ENCODE measurements at regions of chr7 and their contacts with region 1.

Region 1: DNA sequence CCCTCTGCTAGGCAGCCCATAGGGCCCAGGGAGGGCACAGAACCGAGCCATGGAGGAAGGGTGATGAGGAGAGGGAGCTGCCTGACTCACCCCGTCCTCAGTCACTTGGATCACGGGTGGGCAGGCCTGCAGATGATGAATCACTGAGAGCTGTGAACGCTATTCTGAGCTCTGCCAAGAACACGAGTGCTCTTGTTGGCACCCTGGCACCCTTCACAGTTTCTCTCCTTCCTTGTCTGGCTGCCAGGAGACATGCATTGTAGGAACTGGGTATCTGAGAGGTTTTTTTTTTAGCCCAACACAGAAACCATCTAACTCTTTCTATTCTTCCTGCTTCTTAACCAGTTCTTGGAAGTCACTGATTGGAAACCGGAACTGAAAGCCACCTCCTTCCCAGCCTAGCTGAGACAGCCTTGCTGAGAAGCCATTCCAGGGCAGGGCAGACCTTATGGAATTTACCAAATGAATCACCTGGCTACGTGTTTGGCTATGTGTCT is 82.1 kb downstream of the SLC37A3 start:
- DNase-seq: peak; percentile 74 to 97
- H3K4me3 ChIP-seq: peak overlapping the region; percentile 11; the same call in 1 of the 2 replicates
- H3K27ac ChIP-seq: peak overlapping the region; percentile 70
- H3K4me1 ChIP-seq: peaks cover 22% of the 10 kb centered on the region
- H3K27me3 ChIP-seq: no peaks in the 10 kb centered on the region
- CTCF ChIP-seq: no peak

Region 2: DNA sequence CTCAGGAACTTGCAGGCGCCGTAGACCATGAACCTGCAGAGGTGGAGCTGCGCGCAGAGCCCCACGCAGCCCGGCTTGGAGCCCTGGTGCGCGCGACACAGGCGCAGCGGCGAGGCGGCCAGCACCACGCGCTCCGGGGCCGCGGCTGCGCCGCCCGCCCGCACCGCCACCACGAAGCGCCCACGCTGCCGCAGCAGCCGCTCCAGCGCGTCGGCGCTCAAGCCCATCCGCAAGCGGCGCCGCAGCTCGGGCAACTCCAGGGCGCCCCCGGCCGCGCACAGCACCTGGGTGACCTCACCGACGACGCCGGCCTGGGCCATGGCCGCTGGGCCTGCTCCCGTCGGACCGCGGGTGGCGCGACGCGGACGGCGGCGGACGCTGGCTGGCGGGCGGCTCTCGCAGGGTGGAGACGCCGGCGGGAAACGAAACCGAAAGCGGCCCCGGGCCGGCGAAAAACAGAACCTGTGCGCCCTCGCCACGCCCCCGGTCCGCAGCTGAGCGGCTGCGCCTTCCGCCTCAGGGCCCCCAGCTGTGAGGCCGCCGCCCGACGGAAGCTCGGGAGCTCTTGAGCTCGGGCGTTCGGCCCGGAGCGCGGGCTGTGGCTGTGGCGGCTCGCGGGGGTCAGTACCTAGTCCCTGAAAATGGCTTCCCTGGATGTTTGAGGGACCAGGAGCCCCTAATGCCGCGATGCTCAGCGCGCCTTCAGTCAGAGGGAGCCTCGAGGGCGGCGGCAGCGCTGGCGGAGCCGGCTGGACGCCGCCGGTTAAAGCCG is 253.5 kb before region 1 on chr7 and contains the start of gene PARP12:
- CTCF ChIA-PET with region 1: interaction called, 3 read pairs
- POLR2A ChIA-PET with region 1: interaction called, 7 read pairs
- intact Hi-C with region 1: loop called (anchors 10 kb)
- DNase-seq: peak; percentile 70 to 91
- H3K4me3 ChIP-seq: peak within 1 kb of the TSS; percentile 87
- H3K27ac ChIP-seq: no peak within 1 kb of the TSS
- H3K4me1 ChIP-seq: peaks cover 37% of the 10 kb centered on the region
- H3K27me3 ChIP-seq: no peaks in the 10 kb centered on the region
- CTCF ChIP-seq: no peak
- total RNA-seq, gene PARP12: 32.4 and 37.7 TPM in 2 replicates

Region 3: GRCh38 chr7:140304191-140304799 is 11.9 kb before region 1 on chr7:
- CTCF ChIA-PET with region 1: interaction called, 13 read pairs
- POLR2A ChIA-PET with region 1: no interaction called
- intact Hi-C with region 1: no loop called
- DNase-seq: no peak
- H3K4me3 ChIP-seq: no peak overlapping the region
- H3K27ac ChIP-seq: no peak overlapping the region
- H3K4me1 ChIP-seq: no peaks in the 10 kb centered on the region
- H3K27me3 ChIP-seq: no peaks in the 10 kb centered on the region
- CTCF ChIP-seq: 0 out of 2 replicates have a peak, but pooled peaks have one; percentile 28

Region 4: DNA sequence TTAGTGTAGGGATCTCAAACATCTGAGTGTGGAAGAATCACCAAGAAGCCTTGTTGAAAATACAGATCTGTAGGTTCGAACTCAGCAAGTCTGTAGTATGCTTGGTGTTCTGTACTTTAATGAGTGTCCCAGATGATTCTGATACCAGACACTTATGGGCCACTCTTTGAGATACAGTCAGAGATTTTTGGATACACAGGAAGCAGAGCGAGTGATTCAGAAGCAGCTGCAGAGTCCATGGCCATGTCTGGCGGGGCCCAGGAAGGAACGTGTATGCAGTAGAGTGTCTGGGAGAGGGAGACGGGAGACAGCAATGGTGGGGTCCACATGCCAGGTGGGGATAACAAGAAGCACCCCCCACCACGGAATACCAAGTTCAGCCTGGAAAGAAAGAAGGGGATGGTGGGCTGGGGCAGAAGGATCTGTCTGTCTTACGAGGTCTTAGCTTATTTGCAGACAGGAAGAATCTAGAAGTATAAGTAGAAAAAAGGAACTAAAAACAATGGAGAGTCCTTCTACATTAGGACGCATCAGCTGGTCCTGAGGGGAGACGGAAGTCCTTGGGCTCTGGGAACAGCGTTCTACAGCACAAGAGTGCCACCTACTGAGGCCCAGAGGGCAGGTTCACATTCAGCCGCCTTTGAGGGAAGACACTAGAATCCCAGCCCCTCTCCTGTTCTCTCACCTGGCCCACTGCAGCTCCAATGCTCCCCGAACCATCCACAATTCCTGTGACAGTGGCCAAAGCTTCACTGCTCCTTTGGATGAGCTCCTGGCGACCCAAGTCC is 26.7 kb after region 1 on chr7:
- CTCF ChIA-PET with region 1: no interaction called
- POLR2A ChIA-PET with region 1: no interaction called
- intact Hi-C with region 1: no loop called
- DNase-seq: no peak
- H3K4me3 ChIP-seq: no peak overlapping the region
- H3K27ac ChIP-seq: no peak overlapping the region
- H3K4me1 ChIP-seq: no peaks in the 10 kb centered on the region
- H3K27me3 ChIP-seq: no peaks in the 10 kb centered on the region
- CTCF ChIP-seq: peak; percentile 55

Measured in PC-9 (cell line).